B cell (primary cell): ENCODE measurements at regions of chr7 and their contacts with region 1.

Region 1: GRCh38 chr7:1940402-1940786 is 270.3 kb downstream of the ELFN1 start:
- DNase-seq: peak; percentile 92
- ATAC-seq: peak; percentile 98
- H3K4me3 ChIP-seq: peak overlapping the region; percentile 46 to 95 (median 77)
- H3K4me3 Mint-ChIP-seq: peak overlapping the region; percentile 94
- H3K27ac ChIP-seq: peak overlapping the region; percentile 91 to 98
- H3K27ac Mint-ChIP-seq: peak overlapping the region; percentile 97
- H3K4me1 ChIP-seq: peaks cover 27 to 36% of the 10 kb centered on the region in 2 donors
- H3K4me1 Mint-ChIP-seq: peaks cover 43% of the 10 kb centered on the region
- H3K27me3 ChIP-seq: no peaks in the 10 kb centered on the region
- H3K27me3 Mint-ChIP-seq: no peaks in the 10 kb centered on the region
- CTCF ChIP-seq: no peak

Region 2: DNA sequence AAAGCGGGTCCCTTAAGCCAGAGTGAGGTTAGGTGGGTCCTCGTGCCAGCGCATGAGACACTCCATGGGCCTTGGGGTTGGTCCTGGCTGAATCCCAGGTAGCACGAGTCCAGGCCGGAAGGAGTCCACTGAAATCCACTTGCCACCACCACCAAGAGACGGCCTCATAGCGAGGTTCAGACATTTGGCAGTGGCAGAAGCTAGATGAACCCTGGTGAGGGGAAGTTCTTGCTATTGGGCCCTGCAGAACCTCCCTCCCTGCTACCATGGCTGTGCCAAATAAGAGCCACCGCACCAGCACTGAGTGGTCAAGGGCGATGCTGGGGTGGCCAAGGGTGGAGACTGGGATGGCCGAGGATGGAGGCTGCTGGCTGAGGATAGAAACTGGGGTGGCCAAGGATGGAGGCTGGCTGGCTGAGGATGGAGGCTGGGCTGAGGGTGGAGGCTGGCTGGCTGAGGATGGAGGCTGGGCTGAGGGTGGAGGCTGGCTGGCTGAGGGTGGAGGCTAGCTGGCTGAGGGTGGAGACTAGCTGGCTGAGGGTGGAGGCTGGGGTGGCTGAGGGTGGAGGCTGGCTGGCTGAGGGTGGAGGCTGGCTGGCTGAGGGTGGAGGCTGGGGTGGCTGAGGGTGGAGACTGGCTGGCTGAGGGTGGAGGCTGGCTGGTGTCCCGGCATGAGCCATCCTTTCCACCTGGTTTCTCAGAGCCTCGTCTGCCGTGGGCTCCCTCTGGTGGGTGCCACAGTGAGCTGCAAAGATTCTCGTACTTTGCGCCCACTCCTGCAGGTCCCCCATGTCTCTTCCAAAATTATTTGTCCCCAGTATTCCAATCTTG is 182.2 kb before region 1 on chr7:
- CTCF ChIA-PET with region 1: no interaction called
- POLR2A ChIA-PET with region 1: no interaction called
- intact Hi-C with region 1: no loop called
- DNase-seq: no peak
- ATAC-seq: no peak
- H3K4me3 ChIP-seq: no peak overlapping the region
- H3K4me3 Mint-ChIP-seq: no peak overlapping the region
- H3K27ac ChIP-seq: no peak overlapping the region
- H3K27ac Mint-ChIP-seq: no peak overlapping the region
- H3K4me1 ChIP-seq: peaks cover 8 to 17% of the 10 kb centered on the region in 2 donors
- H3K4me1 Mint-ChIP-seq: peaks cover 20% of the 10 kb centered on the region
- H3K27me3 ChIP-seq: peaks cover 0 to 23% (median 7%) of the 10 kb centered on the region in 4 experiments
- H3K27me3 Mint-ChIP-seq: peaks cover 31% of the 10 kb centered on the region
- CTCF ChIP-seq: no peak

Region 3: DNA sequence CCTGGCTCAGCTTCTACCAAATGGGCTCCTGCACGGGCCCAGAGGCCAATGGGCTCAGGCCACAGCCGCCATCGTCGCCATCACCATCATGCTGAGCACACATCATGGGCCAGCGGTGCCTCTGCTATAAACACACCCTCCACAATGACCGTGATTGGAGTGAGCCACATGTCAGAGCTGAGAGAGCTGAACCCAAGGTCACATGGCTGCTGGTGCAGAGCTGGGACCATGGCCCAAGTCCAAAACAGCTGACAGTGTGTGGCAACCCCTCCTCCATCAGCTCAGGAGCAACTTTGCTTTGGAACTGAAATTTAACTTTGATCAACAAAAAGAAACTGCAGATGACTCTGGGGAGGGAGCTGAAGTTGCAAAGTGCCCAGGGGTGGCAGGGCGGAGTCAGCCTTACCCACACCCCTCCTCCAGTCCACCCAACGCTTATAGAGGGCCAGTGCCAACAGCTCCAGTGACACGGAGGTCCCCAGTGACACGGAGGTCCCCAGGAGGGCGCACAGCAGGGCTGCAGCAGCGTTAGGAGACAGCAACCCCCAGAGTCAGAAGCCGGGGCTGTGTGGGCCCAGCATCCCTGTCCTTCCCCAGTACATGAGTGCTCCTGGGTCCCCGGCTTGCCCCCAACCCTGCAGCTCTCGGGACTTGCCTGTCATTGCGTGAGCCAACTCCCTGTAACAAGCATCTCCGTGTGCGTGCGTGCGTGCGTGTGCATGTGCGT is 20.7 kb before region 1 on chr7:
- CTCF ChIA-PET with region 1: no interaction called
- POLR2A ChIA-PET with region 1: interaction called, 3 read pairs
- intact Hi-C with region 1: loop called (anchors 1 kb)
- DNase-seq: no peak
- ATAC-seq: peak; percentile 38
- H3K4me3 ChIP-seq: peak overlapping the region; percentile 4 to 46 (median 39)
- H3K4me3 Mint-ChIP-seq: peak overlapping the region; percentile 88
- H3K27ac ChIP-seq: peak overlapping the region in 1 of 2 donors; percentile 19
- H3K27ac Mint-ChIP-seq: peak overlapping the region; percentile 66
- H3K4me1 ChIP-seq: peaks cover 26 to 32% of the 10 kb centered on the region in 2 donors
- H3K4me1 Mint-ChIP-seq: peaks cover 34% of the 10 kb centered on the region
- H3K27me3 ChIP-seq: no peaks in the 10 kb centered on the region
- H3K27me3 Mint-ChIP-seq: no peaks in the 10 kb centered on the region
- CTCF ChIP-seq: no peak

Region 4: GRCh38 chr7:1925973-1926907 is 14.2 kb before region 1 on chr7:
- CTCF ChIA-PET with region 1: interaction called, 3 read pairs
- POLR2A ChIA-PET with region 1: interaction called, 16 read pairs
- intact Hi-C with region 1: loop called (anchors 1 kb)
- DNase-seq: no peak
- ATAC-seq: no peak
- H3K4me3 ChIP-seq: peak overlapping the region in 1 of 5 experiments; percentile 5
- H3K4me3 Mint-ChIP-seq: peak overlapping the region; percentile 42
- H3K27ac ChIP-seq: peak overlapping the region; percentile 65 to 68
- H3K27ac Mint-ChIP-seq: peak overlapping the region; percentile 82
- H3K4me1 ChIP-seq: peaks cover 45 to 50% of the 10 kb centered on the region in 2 donors
- H3K4me1 Mint-ChIP-seq: peaks cover 56% of the 10 kb centered on the region
- H3K27me3 ChIP-seq: no peaks in the 10 kb centered on the region
- H3K27me3 Mint-ChIP-seq: no peaks in the 10 kb centered on the region
- CTCF ChIP-seq: no peak

Region 5: GRCh38 chr7:1974290-1975101 is 34.1 kb after region 1 on chr7:
- CTCF ChIA-PET with region 1: no interaction called
- POLR2A ChIA-PET with region 1: no interaction called
- intact Hi-C with region 1: no loop called
- DNase-seq: no peak
- ATAC-seq: no peak
- H3K4me3 ChIP-seq: no peak overlapping the region
- H3K4me3 Mint-ChIP-seq: no peak overlapping the region
- H3K27ac ChIP-seq: no peak overlapping the region
- H3K27ac Mint-ChIP-seq: no peak overlapping the region
- H3K4me1 ChIP-seq: peaks cover 7 to 10% of the 10 kb centered on the region in 2 donors
- H3K4me1 Mint-ChIP-seq: peaks cover 12% of the 10 kb centered on the region
- H3K27me3 ChIP-seq: no peaks in the 10 kb centered on the region
- H3K27me3 Mint-ChIP-seq: no peaks in the 10 kb centered on the region
- CTCF ChIP-seq: no peak

Region 6: GRCh38 chr7:2037808-2038522 is 97.6 kb after region 1 on chr7:
- CTCF ChIA-PET with region 1: no interaction called
- POLR2A ChIA-PET with region 1: interaction called, 3 read pairs
- intact Hi-C with region 1: loop called (anchors 1 kb)
- DNase-seq: peak; percentile 79
- ATAC-seq: peak; percentile 65
- H3K4me3 ChIP-seq: peak overlapping the region; percentile 16 to 90 (median 57)
- H3K4me3 Mint-ChIP-seq: peak overlapping the region; percentile 93
- H3K27ac ChIP-seq: peak overlapping the region; percentile 74 to 84
- H3K27ac Mint-ChIP-seq: peak overlapping the region; percentile 88
- H3K4me1 ChIP-seq: peaks cover 54 to 60% of the 10 kb centered on the region in 2 donors
- H3K4me1 Mint-ChIP-seq: peaks cover 65% of the 10 kb centered on the region
- H3K27me3 ChIP-seq: no peaks in the 10 kb centered on the region
- H3K27me3 Mint-ChIP-seq: no peaks in the 10 kb centered on the region
- CTCF ChIP-seq: no peak